Activated T-helper 2 cell treated with anti-CD3 and anti-CD28 coated beads, Interferon-gamma antibody, Interleukin-2, Interleukin-4, amounts not matched to agents 10 μg/mL and 5 μg/mL and 100 μg/mL, durations not matched to agents 14 hours and 24 hours and 36 hours (primary cell): ENCODE measurements at regions of chr18 and their contacts with region 1.

Region 1: DNA sequence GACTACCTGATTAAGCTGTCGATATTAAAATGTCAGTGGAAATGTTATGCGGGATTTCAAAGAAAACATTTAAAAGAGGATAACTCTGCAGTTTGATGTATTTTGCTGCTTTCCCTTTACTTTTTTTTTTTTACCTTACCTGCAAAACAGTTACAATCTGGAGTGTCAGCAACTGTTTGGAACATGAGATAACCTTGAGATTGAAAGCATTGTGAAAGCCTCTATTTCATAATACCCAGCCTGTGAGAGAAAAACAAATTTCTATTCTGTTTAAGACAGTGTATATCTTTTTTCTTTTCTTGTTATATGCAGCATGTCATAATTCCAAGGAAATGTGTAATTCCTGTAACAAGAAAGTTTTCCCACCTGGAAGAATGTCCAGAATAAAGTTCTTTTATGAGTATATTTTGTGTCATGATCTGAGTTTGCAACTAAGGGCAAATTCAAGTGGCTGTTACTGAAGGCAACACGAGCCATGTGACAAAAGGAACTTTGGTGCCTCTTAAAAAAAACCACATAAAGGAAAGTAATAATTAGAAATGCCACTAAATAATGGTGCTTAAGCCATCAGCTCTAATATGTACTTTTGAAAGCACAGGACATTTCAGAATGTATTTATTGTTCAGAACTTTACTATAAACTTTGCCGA is 297.0 kb upstream of the DSEL start:
- DNase-seq: no peak
- H3K4me3 Mint-ChIP-seq: no peak overlapping the region
- H3K27ac Mint-ChIP-seq: no peak overlapping the region
- H3K4me1 Mint-ChIP-seq: no peaks in the 10 kb centered on the region
- H3K27me3 Mint-ChIP-seq: no peaks in the 10 kb centered on the region

Region 2: GRCh38 chr18:67072791-67073190 is 740.7 kb before region 1 on chr18:
- intact Hi-C with region 1: loop called (anchors 5 kb)
- DNase-seq: no peak
- H3K4me3 Mint-ChIP-seq: no peak overlapping the region
- H3K27ac Mint-ChIP-seq: no peak overlapping the region
- H3K4me1 Mint-ChIP-seq: no peaks in the 10 kb centered on the region
- H3K27me3 Mint-ChIP-seq: no peaks in the 10 kb centered on the region

Region 3: DNA sequence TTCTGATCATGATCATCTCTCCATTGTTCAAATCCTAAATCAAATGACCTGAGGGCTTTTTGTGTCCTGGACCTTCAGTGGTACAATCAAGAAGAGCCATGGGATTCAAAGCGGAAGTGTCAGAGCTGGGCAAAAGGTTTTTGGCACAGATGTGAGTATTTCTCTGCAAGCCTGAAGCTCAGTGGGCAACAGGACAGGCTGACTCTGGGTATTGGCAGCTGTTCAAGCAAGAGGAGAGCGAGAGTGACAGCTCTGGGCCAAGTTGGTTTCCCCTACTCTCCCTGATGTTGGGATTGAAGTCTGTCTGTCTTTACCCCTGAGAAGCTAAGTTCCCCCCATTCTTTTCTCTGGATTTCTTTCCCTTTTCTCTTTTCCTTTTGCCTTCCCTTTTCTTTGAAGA is 330.3 kb before region 1 on chr18:
- intact Hi-C with region 1: no loop called
- DNase-seq: no peak
- H3K4me3 Mint-ChIP-seq: no peak overlapping the region
- H3K27ac Mint-ChIP-seq: no peak overlapping the region
- H3K4me1 Mint-ChIP-seq: no peaks in the 10 kb centered on the region
- H3K27me3 Mint-ChIP-seq: peaks cover 2% of the 10 kb centered on the region

Region 4: DNA sequence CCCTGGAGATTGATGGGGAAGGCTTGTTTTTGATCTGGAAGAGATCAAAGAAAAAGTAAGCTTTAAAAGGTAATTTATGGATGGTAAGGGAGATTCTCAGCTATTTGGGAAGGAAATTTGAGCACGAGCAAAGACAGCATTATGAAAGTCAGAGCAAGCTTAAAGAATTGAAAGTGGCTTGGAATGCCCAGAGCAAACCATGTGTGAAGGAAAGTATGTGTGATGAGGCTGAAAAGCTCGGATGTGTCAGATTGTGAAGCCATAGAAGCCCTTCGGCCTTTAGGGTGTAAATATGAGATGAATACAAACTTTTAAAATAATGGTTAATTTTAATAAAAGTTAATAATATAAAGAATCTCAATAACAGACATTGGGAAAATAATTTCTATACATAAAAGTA is 80.4 kb after region 1 on chr18:
- intact Hi-C with region 1: no loop called
- DNase-seq: no peak
- H3K4me3 Mint-ChIP-seq: no peak overlapping the region
- H3K27ac Mint-ChIP-seq: no peak overlapping the region
- H3K4me1 Mint-ChIP-seq: no peaks in the 10 kb centered on the region
- H3K27me3 Mint-ChIP-seq: no peaks in the 10 kb centered on the region